Activated CD4-positive, alpha-beta T cell treated with anti-CD3 and anti-CD28 coated beads for 36 hours (primary cell): ENCODE measurements at regions of chr4 and their contacts with region 1.

Region 1: DNA sequence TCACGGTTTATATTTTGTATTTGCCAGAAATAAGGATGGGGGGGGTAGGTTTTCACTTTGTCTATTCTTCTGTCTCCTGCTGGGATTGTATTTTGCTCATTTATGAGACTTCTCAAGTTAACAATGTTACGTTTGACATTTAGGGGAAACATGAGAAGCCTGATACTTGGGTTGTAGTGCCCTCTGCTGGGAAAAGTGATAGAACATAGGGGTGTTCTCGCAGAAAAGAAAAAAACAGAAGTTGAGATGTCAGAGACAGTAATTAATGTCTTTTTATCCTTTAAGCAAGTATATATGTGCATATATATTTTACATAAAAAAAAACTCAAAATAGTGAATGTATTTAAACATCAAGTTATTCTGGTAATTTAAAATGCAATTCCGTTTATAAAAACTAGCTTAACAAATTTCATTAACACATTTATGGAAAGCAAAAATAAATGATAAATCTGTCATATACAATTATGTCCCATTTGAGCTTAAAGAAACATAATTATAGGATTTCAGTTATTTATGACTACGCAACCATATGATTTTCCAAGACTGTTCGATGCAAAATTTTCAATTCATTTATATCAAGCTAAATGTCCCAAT is 46.0 kb upstream of the TMPRSS11F start:
- DNase-seq: peak; percentile 64
- ATAC-seq: peak; percentile 77
- H3K4me3 Mint-ChIP-seq: no peak overlapping the region
- H3K27ac Mint-ChIP-seq: no peak overlapping the region
- H3K4me1 Mint-ChIP-seq: no peaks in the 10 kb centered on the region
- H3K27me3 Mint-ChIP-seq: peaks cover 14% of the 10 kb centered on the region

Region 2: GRCh38 chr4:67746797-67747495 is 428.7 kb before region 1 on chr4:
- CTCF ChIA-PET with region 1: interaction called, 12 read pairs
- POLR2A ChIA-PET with region 1: no interaction called
- intact Hi-C with region 1: loop called (anchors 1 to 5 kb)
- DNase-seq: no peak
- ATAC-seq: peak; percentile 78
- H3K4me3 Mint-ChIP-seq: peak overlapping the region; percentile 5
- H3K27ac Mint-ChIP-seq: peak overlapping the region; percentile 77
- H3K4me1 Mint-ChIP-seq: peaks cover 11% of the 10 kb centered on the region
- H3K27me3 Mint-ChIP-seq: no peaks in the 10 kb centered on the region

Region 3: DNA sequence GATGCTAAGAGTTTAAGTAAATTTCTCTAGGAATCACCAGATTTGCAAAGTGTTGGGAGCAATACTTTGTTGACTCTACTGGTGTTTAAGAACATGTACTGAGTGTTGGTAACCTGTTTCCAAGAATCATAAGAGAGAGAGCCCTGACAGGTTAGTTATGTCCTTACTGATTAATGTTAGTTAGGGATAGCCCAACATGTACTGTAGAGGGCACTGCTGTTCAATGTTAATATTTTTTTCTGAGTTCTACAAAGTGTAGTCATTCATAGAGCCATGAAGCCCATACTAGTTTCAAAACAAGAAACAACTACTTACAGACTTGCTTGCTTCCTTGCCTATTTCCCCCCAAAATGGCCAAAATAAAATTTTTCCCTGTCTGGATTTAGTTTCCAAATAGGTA is 303.8 kb before region 1 on chr4:
- CTCF ChIA-PET with region 1: interaction called, 4 read pairs
- POLR2A ChIA-PET with region 1: no interaction called
- intact Hi-C with region 1: loop called (anchors 2 to 10 kb)
- DNase-seq: no peak
- ATAC-seq: peak; percentile 65
- H3K4me3 Mint-ChIP-seq: no peak overlapping the region
- H3K27ac Mint-ChIP-seq: no peak overlapping the region
- H3K4me1 Mint-ChIP-seq: no peaks in the 10 kb centered on the region
- H3K27me3 Mint-ChIP-seq: peaks cover 2% of the 10 kb centered on the region

Region 4: GRCh38 chr4:67918428-67918827 is 257.2 kb before region 1 on chr4:
- CTCF ChIA-PET with region 1: no interaction called
- POLR2A ChIA-PET with region 1: no interaction called
- intact Hi-C with region 1: loop called in 1 of 2 experiments (anchors 1 kb)
- DNase-seq: no peak
- ATAC-seq: no peak
- H3K4me3 Mint-ChIP-seq: no peak overlapping the region
- H3K27ac Mint-ChIP-seq: no peak overlapping the region
- H3K4me1 Mint-ChIP-seq: no peaks in the 10 kb centered on the region
- H3K27me3 Mint-ChIP-seq: peaks cover 9% of the 10 kb centered on the region

Region 5: GRCh38 chr4:67988991-67989390 is 186.7 kb before region 1 on chr4:
- CTCF ChIA-PET with region 1: interaction called, 7 read pairs
- POLR2A ChIA-PET with region 1: no interaction called
- intact Hi-C with region 1: loop called (anchors 1 kb)
- DNase-seq: no peak
- ATAC-seq: no peak
- H3K4me3 Mint-ChIP-seq: no peak overlapping the region
- H3K27ac Mint-ChIP-seq: no peak overlapping the region
- H3K4me1 Mint-ChIP-seq: peaks cover 5% of the 10 kb centered on the region
- H3K27me3 Mint-ChIP-seq: no peaks in the 10 kb centered on the region